HEK293 (cell line): ENCODE measurements at regions of chr1 and their contacts with region 1.

Region 1: DNA sequence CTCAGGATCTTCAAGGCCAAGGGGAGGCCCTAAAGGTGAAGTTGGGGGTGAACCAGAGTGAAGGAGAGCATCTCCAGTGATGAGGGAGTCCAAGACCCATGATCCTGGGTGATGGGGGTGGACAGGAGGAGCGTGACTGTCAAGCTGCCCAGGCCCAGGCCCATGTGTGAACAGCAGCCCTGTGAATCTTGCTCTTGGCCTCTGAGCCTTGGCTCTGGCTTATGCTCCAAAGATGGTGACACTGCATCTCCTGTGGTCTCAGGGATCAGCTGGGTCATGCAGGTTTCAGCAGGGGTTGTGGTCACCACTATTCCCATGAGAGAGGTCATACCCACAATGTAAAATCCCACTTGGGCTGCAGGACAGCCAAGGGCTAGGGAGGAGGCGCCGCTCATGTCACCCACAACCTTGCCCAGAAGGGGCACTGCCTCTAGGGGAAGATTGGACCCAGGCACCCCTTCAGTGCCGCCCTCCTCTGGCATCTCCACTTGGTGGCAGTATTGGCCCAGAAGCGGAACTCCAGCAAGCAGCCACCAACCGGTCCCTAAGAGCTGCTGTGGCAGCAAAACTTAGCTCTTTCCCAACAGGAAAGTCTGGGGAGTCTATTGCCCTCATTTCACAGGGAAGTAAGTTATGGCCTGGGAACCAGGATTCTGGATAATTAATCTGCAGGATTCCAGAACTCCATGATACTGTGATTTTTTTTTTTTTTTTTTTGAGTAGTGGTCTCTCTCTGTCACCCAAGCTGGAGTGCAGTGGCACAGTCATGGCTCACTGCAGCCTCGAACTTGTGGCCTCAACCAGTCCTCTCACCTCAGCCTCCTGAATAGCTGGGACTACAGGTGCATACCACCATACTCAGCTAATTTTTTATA is 7.5 kb upstream of the WNT3A start:
- H3K4me3 ChIP-seq: no peak overlapping the region
- H3K27ac ChIP-seq: no peak overlapping the region
- H3K4me1 ChIP-seq: no peaks in the 10 kb centered on the region
- CTCF ChIP-seq: peak; percentile 92

Region 2: DNA sequence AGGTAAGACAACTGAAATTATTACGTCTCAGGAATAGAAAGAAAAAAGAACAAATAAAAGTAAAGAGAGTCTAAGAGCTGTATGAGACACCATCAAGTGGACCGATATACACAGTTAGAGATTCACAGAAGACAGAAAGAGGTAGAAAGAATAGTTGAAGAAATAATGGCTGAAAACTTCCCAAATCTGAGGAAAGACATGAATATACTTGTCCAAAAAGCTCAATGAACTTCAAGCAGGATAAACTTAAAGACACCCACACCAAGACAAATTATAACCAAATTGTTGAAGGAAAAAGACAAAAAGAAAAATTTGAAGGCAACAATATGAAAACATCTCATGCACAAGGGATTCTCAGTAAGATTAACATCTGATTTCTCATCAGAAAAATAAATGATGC is 12.1 kb before region 1 on chr1:
- CTCF ChIA-PET with region 1: interaction called, 31 read pairs
- POLR2A ChIA-PET with region 1: no interaction called
- H3K4me3 ChIP-seq: no peak overlapping the region
- H3K27ac ChIP-seq: no peak overlapping the region
- H3K4me1 ChIP-seq: no peaks in the 10 kb centered on the region
- CTCF ChIP-seq: no peak

Region 3: GRCh38 chr1:228073857-228074545 is 74.7 kb after region 1 on chr1:
- CTCF ChIA-PET with region 1: interaction called, 27 read pairs
- POLR2A ChIA-PET with region 1: no interaction called
- H3K4me3 ChIP-seq: no peak overlapping the region
- H3K27ac ChIP-seq: no peak overlapping the region
- H3K4me1 ChIP-seq: no peaks in the 10 kb centered on the region
- CTCF ChIP-seq: peak; percentile 37

Region 4: GRCh38 chr1:228101614-228101993 is 102.3 kb after region 1 on chr1:
- CTCF ChIA-PET with region 1: interaction called, 20 read pairs
- POLR2A ChIA-PET with region 1: interaction called, 7 read pairs
- H3K4me3 ChIP-seq: peak overlapping the region; percentile 88
- H3K27ac ChIP-seq: peak overlapping the region; percentile 82
- H3K4me1 ChIP-seq: no peaks in the 10 kb centered on the region; the same call in 1 of the 2 replicates
- CTCF ChIP-seq: no peak

Region 5: GRCh38 chr1:228515200-228515834 is 516.0 kb after region 1 on chr1:
- CTCF ChIA-PET with region 1: interaction called, 21 read pairs
- POLR2A ChIA-PET with region 1: no interaction called
- H3K4me3 ChIP-seq: no peak overlapping the region
- H3K27ac ChIP-seq: no peak overlapping the region
- H3K4me1 ChIP-seq: no peaks in the 10 kb centered on the region
- CTCF ChIP-seq: peak; percentile 89